Caco-2 (cell line): ENCODE measurements at regions of chr20 and their contacts with region 1.

Region 1: GRCh38 chr20:34312544-34313217 is 9.5 kb upstream of the AHCY start:
- DNase-seq: peak; percentile 97 to 99
- H3K4me3 ChIP-seq: peak overlapping the region; percentile 53
- H3K4me3 Mint-ChIP-seq: peak overlapping the region; percentile 77
- H3K27ac Mint-ChIP-seq: peak overlapping the region; percentile 79
- H3K4me1 ChIP-seq: peaks cover 34% of the 10 kb centered on the region
- H3K4me1 Mint-ChIP-seq: peaks cover 16% of the 10 kb centered on the region
- H3K27me3 ChIP-seq: no peaks in the 10 kb centered on the region
- H3K27me3 Mint-ChIP-seq: no peaks in the 10 kb centered on the region
- CTCF ChIP-seq: peak; percentile 100

Region 2: GRCh38 chr20:34293589-34293988 is 19.1 kb before region 1 on chr20:
- CTCF ChIA-PET with region 1: interaction called, 14 read pairs
- POLR2A ChIA-PET with region 1: interaction called, 3 read pairs
- intact Hi-C with region 1: no loop called
- DNase-seq: no peak
- H3K4me3 ChIP-seq: no peak overlapping the region
- H3K4me3 Mint-ChIP-seq: no peak overlapping the region
- H3K27ac Mint-ChIP-seq: peak overlapping the region; percentile 14
- H3K4me1 ChIP-seq: no peaks in the 10 kb centered on the region
- H3K4me1 Mint-ChIP-seq: no peaks in the 10 kb centered on the region
- H3K27me3 ChIP-seq: no peaks in the 10 kb centered on the region
- H3K27me3 Mint-ChIP-seq: no peaks in the 10 kb centered on the region
- CTCF ChIP-seq: no peak

Region 3: GRCh38 chr20:34363062-34363464 is 50.4 kb after region 1 on chr20 and contains the start of gene ITCH:
- CTCF ChIA-PET with region 1: interaction called, 124 read pairs
- POLR2A ChIA-PET with region 1: interaction called, 76 read pairs
- intact Hi-C with region 1: loop called (anchors 1 kb)
- DNase-seq: peak; percentile 99
- H3K4me3 ChIP-seq: peak within 1 kb of the TSS; percentile 93
- H3K4me3 Mint-ChIP-seq: peak within 1 kb of the TSS; percentile 81
- H3K27ac Mint-ChIP-seq: peak within 1 kb of the TSS; percentile 96
- H3K4me1 ChIP-seq: peaks cover 26% of the 10 kb centered on the region
- H3K4me1 Mint-ChIP-seq: peaks cover 23% of the 10 kb centered on the region
- H3K27me3 ChIP-seq: no peaks in the 10 kb centered on the region
- H3K27me3 Mint-ChIP-seq: no peaks in the 10 kb centered on the region
- CTCF ChIP-seq: no peak
- total RNA-seq, gene ITCH: 135 and 138 TPM in 2 replicates

Region 4: DNA sequence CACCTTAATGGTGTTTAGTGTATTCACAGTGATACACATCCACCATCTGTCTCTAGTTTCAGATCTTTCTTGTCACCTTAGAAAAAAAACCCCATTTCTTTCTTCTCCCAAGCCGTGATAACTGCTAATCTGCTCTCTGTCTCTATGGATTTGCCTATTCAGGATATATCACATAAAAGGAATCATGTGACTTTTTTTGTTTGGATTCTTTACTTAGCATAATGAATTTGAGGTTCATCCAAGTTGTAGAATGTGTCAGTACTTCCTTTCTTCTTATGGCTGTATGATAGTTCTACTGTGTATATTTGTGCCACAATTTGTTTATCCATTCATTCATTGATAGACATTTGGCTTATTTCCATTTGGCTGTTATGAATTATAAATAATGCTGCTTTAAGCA is 107.5 kb after region 1 on chr20:
- CTCF ChIA-PET with region 1: interaction called, 37 read pairs
- POLR2A ChIA-PET with region 1: no interaction called
- intact Hi-C with region 1: loop called (anchors 1 kb)
- DNase-seq: no peak
- H3K4me3 ChIP-seq: no peak overlapping the region
- H3K4me3 Mint-ChIP-seq: no peak overlapping the region
- H3K27ac Mint-ChIP-seq: peak overlapping the region; percentile 2
- H3K4me1 ChIP-seq: peaks cover 21% of the 10 kb centered on the region
- H3K4me1 Mint-ChIP-seq: peaks cover 32% of the 10 kb centered on the region
- H3K27me3 ChIP-seq: no peaks in the 10 kb centered on the region
- H3K27me3 Mint-ChIP-seq: no peaks in the 10 kb centered on the region
- CTCF ChIP-seq: no peak

Region 5: GRCh38 chr20:34461779-34462087 is 149.1 kb after region 1 on chr20:
- CTCF ChIA-PET with region 1: interaction called, 14 read pairs
- POLR2A ChIA-PET with region 1: interaction called, 5 read pairs
- intact Hi-C with region 1: no loop called
- DNase-seq: no peak
- H3K4me3 ChIP-seq: no peak overlapping the region
- H3K4me3 Mint-ChIP-seq: no peak overlapping the region
- H3K27ac Mint-ChIP-seq: peak overlapping the region; percentile 10
- H3K4me1 ChIP-seq: no peaks in the 10 kb centered on the region
- H3K4me1 Mint-ChIP-seq: peaks cover 15% of the 10 kb centered on the region
- H3K27me3 ChIP-seq: no peaks in the 10 kb centered on the region
- H3K27me3 Mint-ChIP-seq: no peaks in the 10 kb centered on the region
- CTCF ChIP-seq: no peak

Region 6: GRCh38 chr20:34538671-34539123 is 226.0 kb after region 1 on chr20:
- CTCF ChIA-PET with region 1: interaction called, 10 read pairs
- POLR2A ChIA-PET with region 1: no interaction called
- intact Hi-C with region 1: loop called (anchors 1 kb)
- DNase-seq: peak; percentile 83 to 90
- H3K4me3 ChIP-seq: no peak overlapping the region
- H3K4me3 Mint-ChIP-seq: no peak overlapping the region
- H3K27ac Mint-ChIP-seq: peak overlapping the region; percentile 16
- H3K4me1 ChIP-seq: no peaks in the 10 kb centered on the region
- H3K4me1 Mint-ChIP-seq: no peaks in the 10 kb centered on the region
- H3K27me3 ChIP-seq: no peaks in the 10 kb centered on the region
- H3K27me3 Mint-ChIP-seq: no peaks in the 10 kb centered on the region
- CTCF ChIP-seq: peak; percentile 98 to 99

Region 7: GRCh38 chr20:34744847-34745246 is 432.2 kb after region 1 on chr20:
- CTCF ChIA-PET with region 1: no interaction called
- POLR2A ChIA-PET with region 1: no interaction called
- intact Hi-C with region 1: no loop called
- DNase-seq: no peak
- H3K4me3 ChIP-seq: no peak overlapping the region
- H3K4me3 Mint-ChIP-seq: no peak overlapping the region
- H3K27ac Mint-ChIP-seq: no peak overlapping the region
- H3K4me1 ChIP-seq: no peaks in the 10 kb centered on the region
- H3K4me1 Mint-ChIP-seq: no peaks in the 10 kb centered on the region
- H3K27me3 ChIP-seq: no peaks in the 10 kb centered on the region
- H3K27me3 Mint-ChIP-seq: no peaks in the 10 kb centered on the region
- CTCF ChIP-seq: no peak